ENCODE measurements at regions of chr4 and their contacts with region 1.

Region 1: DNA sequence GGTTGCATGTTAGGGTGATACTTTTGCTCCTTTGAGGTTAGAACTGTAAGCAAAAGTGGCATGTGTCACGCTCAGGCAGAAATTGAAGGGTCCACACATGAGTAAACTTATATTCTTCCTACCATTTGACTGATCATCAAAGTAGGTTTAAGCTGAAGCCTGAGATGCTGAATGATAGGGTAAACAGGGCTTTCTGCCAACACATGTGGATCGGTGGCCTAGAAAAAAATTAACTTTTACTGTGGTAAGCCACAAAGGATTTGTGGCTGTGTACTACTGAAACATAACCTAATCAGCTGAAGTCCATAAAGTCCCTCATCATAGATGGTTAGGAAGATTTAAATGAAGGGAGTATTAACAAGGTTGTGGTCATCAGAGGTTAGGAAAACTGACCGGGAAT is 1070.1 kb downstream of the STPG2 start:
- DNase-seq: no peak
- H3K4me3 ChIP-seq: no peak overlapping the region
- H3K27ac ChIP-seq: no peak overlapping the region
- H3K4me1 ChIP-seq: no peaks in the 10 kb centered on the region
- H3K27me3 ChIP-seq: no peaks in the 10 kb centered on the region
- CTCF ChIP-seq: no peak

Region 2: GRCh38 chr4:96543346-96543745 is 529.8 kb before region 1 on chr4:
- CTCF ChIA-PET with region 1: no interaction called
- dilution Hi-C with region 1: no loop called
- in situ Hi-C with region 1: no loop called
- intact Hi-C with region 1: no loop called
- DNase-seq: no peak
- H3K4me3 ChIP-seq: no peak overlapping the region
- H3K27ac ChIP-seq: no peak overlapping the region
- H3K4me1 ChIP-seq: no peaks in the 10 kb centered on the region
- H3K27me3 ChIP-seq: no peaks in the 10 kb centered on the region
- CTCF ChIP-seq: no peak

Region 3: GRCh38 chr4:97105347-97106099 is 32.3 kb after region 1 on chr4:
- CTCF ChIA-PET with region 1: no interaction called
- dilution Hi-C with region 1: no loop called
- in situ Hi-C with region 1: no loop called
- intact Hi-C with region 1: no loop called
- DNase-seq: no peak
- H3K4me3 ChIP-seq: no peak overlapping the region
- H3K27ac ChIP-seq: no peak overlapping the region
- H3K4me1 ChIP-seq: peaks cover 7% of the 10 kb centered on the region
- H3K27me3 ChIP-seq: no peaks in the 10 kb centered on the region
- CTCF ChIP-seq: no peak

Region 4: DNA sequence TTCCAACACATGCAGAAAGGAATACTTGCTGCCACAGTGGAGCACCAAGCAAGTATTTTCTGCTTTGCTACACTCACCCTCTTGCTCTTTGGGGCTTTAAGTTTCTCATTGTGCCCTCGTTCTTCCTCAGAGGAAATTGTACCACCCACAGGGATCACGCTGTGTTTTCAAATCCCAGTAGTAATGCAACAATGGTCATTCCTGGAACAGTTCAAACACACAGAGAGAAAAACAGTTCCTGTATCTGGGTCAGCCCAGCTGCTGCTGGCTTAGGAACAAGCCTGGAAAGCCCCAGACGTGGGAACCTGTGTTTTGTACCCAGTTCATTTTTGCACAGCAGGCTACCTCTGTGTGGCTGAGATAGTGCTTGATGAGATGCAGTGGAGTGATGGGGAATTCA is 162.3 kb after region 1 on chr4:
- CTCF ChIA-PET with region 1: no interaction called
- dilution Hi-C with region 1: loop called (anchors 10 kb)
- in situ Hi-C with region 1: no loop called
- intact Hi-C with region 1: no loop called
- DNase-seq: no peak
- H3K4me3 ChIP-seq: no peak overlapping the region
- H3K27ac ChIP-seq: no peak overlapping the region
- H3K4me1 ChIP-seq: no peaks in the 10 kb centered on the region
- H3K27me3 ChIP-seq: no peaks in the 10 kb centered on the region
- CTCF ChIP-seq: no peak

Measured in mammary epithelial cell (primary cell).